ENCODE measurements at regions of chr2 and their contacts with region 1.

Region 1: GRCh38 chr2:38264396-38265281 is 112.4 kb downstream of the ATL2 start:
- DNase-seq: no peak
- H3K4me3 ChIP-seq: no peak overlapping the region
- H3K4me1 ChIP-seq: no peaks in the 10 kb centered on the region
- H3K27me3 ChIP-seq: no peaks in the 10 kb centered on the region

Region 2: GRCh38 chr2:37973615-37974353 is 290.9 kb before region 1 on chr2:
- in situ Hi-C with region 1: loop called (anchors 10 kb)
- DNase-seq: no peak
- H3K4me3 ChIP-seq: no peak overlapping the region
- H3K4me1 ChIP-seq: no peaks in the 10 kb centered on the region
- H3K27me3 ChIP-seq: peaks cover 11% of the 10 kb centered on the region

Region 3: DNA sequence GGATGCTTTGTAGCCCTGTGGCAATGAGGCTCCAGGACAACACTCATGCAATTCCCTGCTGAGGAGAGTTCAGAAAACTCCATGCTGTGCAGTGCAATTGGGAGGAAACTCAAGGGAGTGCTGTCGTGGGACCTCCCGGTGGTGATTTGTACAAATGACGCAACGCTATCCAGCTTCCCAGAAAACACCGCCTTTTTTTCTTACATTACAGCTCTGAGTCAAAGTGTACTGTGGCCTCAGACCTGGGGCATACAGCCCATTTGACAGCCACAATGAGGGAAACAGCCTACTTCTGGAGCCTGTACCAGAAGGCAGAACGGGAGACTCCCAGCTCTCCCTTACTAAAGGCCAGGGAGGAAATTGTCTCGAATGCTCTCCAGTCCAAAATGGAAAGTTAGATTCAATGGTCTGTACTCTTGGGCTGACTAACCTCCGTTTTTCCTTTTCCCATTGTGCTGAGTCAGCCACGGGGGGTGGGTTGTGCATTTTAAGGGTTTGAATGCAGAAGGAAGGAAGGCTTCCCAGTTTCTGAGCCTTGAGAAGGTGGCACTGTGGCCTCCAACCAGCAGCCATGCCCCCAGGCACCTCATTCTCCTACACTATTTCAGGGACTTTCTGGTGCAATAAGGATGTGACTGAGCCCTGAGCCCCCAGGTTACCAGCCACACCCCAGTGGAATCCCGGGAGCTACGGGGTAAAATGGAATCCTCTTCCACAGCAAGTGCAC is 172.3 kb before region 1 on chr2:
- in situ Hi-C with region 1: no loop called
- DNase-seq: no peak
- H3K4me3 ChIP-seq: no peak overlapping the region
- H3K4me1 ChIP-seq: peaks cover 14% of the 10 kb centered on the region
- H3K27me3 ChIP-seq: no peaks in the 10 kb centered on the region

Region 4: DNA sequence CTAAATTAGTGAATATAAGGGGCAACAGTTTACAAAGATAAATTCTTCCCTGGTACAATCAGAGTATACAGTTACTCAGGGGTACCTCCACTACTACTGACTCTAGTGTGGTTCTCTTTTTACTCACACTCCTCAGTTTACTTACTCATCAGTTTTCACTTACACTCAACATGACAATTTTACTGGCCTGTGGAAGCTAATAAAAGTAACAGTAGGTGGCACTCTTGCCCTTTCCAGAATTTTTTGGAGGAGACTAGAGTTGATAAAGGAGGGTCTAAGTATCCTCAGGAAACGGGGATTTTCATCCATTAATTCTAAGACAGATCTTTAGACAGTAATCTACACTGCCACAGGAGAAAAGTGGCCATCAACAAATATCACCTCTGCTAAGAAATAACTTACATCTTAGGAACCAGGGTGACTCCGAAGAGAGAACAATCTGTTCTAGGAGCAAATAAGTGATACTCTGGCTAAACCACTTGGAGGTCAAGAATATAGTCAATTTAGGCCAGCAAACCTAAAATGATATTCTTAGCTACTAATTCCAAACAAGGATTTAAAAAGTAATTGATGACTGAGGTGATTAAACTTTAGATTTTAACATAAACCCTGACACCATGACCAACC is 51.2 kb after region 1 on chr2:
- in situ Hi-C with region 1: no loop called
- DNase-seq: peak; percentile 48 to 74
- H3K4me3 ChIP-seq: no peak overlapping the region
- H3K4me1 ChIP-seq: no peaks in the 10 kb centered on the region
- H3K27me3 ChIP-seq: no peaks in the 10 kb centered on the region

Measured in HAP-1 (cell line).